Left ventricle myocardium inferior (tissue), 1 donor: ENCODE measurements at regions of chr1 and their contacts with region 1.

Region 1: DNA sequence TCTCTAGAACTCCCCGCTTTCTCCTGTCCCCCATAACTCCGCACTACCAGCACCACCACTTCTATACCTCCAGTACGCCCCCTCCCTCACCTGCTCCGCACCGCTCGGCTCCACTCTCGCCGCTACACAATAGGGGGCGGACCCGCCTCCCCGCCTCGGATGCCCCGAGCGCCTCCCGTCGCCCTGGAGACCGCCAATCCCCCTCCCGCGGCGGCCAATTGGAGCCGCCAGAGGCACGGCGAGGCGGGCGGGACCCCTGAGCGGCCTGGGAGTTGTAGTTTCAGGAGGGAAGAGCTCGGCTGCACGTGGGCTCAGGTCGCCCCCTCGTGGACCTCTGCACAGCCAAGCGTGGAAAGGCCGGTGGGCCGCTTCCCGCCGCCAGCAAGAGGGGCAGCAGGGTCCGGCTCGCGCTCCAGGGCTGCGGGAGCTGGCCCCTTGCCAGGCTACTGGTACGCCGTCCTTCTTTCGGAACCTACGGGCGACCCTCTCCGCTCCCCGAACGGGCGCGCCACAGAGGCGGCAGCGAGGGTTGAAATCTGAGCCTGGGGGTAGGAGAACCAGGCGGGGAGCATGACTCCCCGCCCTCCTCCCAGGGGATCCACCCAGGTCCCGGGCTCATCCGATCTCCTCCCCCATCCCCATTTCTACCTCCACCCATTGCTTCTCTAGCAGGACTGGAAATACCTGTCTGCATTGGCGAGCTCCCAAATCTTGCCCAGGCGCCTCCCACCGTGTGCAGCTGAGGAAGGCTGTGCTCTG is at the start of gene IGSF9:
- DNase-seq: peak; percentile 85
- H3K4me3 ChIP-seq: peak within 1 kb of the TSS; percentile 69
- H3K27ac ChIP-seq: no peak within 1 kb of the TSS
- H3K4me1 ChIP-seq: peaks cover 18% of the 10 kb centered on the region
- H3K27me3 ChIP-seq: peaks cover 31% of the 10 kb centered on the region
- CTCF ChIP-seq: peak; percentile 77
- total RNA-seq, gene IGSF9: 0.25 TPM

Region 2: GRCh38 chr1:160006312-160006940 is 60.8 kb after region 1 on chr1:
- intact Hi-C with region 1: loop called (anchors 5 kb)
- DNase-seq: peak; percentile 65
- H3K4me3 ChIP-seq: no peak overlapping the region
- H3K27ac ChIP-seq: no peak overlapping the region
- H3K4me1 ChIP-seq: no peaks in the 10 kb centered on the region
- H3K27me3 ChIP-seq: no peaks in the 10 kb centered on the region
- CTCF ChIP-seq: peak; percentile 87